Activated T-helper 2 cell treated with anti-CD3 and anti-CD28 coated beads, Interferon-gamma antibody, Interleukin-2, Interleukin-4, amounts not matched to agents 10 μg/mL and 5 μg/mL and 100 μg/mL, durations not matched to agents 14 hours and 24 hours and 36 hours (primary cell): ENCODE measurements at regions of chr7 and their contacts with region 1.

Region 1: GRCh38 chr7:50349963-50350944 is 45.7 kb downstream of the IKZF1 start:
- DNase-seq: peak; percentile 80
- H3K4me3 Mint-ChIP-seq: peak overlapping the region; percentile 49
- H3K27ac Mint-ChIP-seq: peak overlapping the region; percentile 91
- H3K4me1 Mint-ChIP-seq: peaks cover 96% of the 10 kb centered on the region
- H3K27me3 Mint-ChIP-seq: no peaks in the 10 kb centered on the region

Region 2: DNA sequence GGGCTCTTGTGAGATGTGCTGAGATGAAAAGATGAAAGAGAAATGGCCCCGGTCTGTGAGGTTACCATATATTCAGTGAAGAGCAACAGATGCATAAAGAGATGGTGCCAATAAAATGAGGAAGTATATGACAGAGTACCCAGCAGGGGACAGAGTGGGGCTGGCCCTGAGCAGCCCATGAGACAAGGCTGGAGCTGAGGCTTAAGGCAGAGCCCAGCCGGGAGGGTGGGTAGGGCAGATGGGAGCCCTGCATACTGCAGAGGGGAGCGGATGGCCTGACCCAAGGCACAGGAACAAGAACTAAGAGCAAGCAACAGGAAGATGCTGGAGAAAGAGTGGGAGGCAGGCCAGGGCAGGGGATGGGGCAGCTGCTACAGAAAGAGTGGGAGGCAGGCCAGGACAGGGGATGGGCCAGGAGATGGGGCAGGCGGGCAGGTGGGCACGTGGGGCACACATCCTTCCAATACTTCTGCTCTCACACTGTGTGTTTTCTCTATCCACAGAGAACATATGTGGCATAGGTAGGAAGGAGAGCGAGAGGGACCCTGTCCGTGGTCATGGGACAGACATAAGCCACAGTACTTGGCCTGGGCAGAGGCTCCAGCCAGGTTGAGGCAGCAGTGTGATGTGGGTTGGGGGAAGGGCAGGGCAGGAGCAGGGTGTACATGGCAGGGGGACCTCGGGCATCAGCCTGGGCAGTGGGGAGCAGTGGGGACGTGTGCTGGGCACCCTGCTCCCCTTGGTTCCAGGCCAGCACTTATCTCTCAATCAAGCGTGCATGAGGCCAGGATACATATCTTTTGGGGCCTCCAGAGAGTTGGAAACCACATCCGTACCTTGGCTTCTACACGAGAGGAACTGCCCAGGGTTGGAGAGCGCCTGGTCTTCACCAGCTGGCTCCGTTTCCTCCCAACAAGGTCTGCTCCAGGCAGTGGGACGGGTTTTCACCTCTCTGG is 137.3 kb before region 1 on chr7:
- intact Hi-C with region 1: loop called (anchors 1 kb)
- DNase-seq: no peak
- H3K4me3 Mint-ChIP-seq: peak overlapping the region; percentile 64
- H3K27ac Mint-ChIP-seq: peak overlapping the region; percentile 92
- H3K4me1 Mint-ChIP-seq: peaks cover 90% of the 10 kb centered on the region
- H3K27me3 Mint-ChIP-seq: no peaks in the 10 kb centered on the region

Region 3: DNA sequence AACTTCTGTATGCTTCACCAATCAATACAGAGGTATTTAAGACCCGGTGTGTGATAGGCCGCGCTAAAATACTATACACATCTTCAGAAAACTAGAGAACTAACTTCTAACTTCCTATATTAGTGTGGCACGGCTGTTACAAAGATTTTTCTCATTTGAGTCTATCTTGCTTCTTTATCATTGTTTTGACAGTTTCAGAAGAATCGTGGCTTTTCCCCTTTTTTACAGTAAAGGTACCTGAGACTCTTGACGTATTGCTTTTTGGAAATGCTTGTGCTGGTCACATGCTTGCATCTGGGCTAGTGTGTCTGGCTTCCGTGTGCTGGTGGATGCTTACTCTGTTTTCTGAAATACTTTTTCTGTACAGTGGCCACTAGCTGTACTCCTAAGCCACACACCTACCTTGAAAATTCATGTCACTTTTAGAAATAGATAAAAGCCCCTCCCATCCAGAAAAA is 33.0 kb before region 1 on chr7:
- intact Hi-C with region 1: loop called (anchors 1 kb)
- DNase-seq: peak; percentile 52
- H3K4me3 Mint-ChIP-seq: peak overlapping the region; percentile 78
- H3K27ac Mint-ChIP-seq: peak overlapping the region; percentile 92
- H3K4me1 Mint-ChIP-seq: peaks cover 90% of the 10 kb centered on the region
- H3K27me3 Mint-ChIP-seq: no peaks in the 10 kb centered on the region